A549 (cell line): ENCODE measurements at regions of chr9 and their contacts with region 1.

Region 1: GRCh38 chr9:37784616-37785483 is at the start of gene EXOSC3:
- DNase-seq: peak; percentile 93 to 94
- ATAC-seq: peak; percentile 98
- H3K4me3 ChIP-seq: peak within 1 kb of the TSS; percentile 74
- H3K27ac ChIP-seq: peak within 1 kb of the TSS; percentile 79 to 90
- H3K4me1 ChIP-seq: peaks cover 19% of the 10 kb centered on the region
- CTCF ChIP-seq: no peak
- EP300 ChIP-seq: no peak
- POLR2A ChIP-seq: peak; percentile 92
- RAD21 ChIP-seq: no peak
- polyA plus RNA-seq, gene EXOSC3: 40.7 and 63.2 TPM in 2 replicates

Region 2: DNA sequence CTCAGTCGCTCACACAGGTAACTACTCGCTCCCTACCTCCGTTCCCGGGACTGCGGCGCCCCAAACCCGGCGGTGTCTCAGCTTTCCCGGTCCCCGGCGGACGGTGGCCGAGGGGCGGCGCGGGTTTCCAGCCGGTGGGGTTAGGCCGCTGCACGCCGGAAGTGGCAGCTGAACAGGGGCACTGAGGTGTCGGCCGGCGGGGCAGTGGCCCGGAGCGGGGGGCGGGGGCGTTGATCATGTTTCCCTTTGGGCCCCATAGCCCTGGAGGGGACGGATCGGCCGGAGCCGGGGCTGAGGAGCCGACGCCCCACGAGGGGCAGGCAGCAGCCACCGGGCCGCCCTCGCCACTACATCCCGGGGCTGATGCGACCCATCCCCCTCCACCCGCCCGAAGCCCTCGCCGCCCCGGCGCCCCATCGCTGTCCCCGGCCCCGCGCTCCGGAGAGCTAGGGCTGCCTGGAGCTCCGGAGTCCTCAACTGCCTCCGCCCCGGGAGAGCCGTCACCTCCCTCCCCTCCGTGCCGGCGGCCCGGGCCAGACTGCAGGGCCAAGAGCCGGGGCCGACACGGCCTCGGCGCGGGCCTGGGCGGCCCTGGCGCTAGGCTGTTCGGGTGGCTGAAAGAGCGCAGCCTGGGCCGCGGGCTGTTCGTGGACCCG is 15.9 kb after region 1 on chr9 and contains the start of gene DCAF10:
- CTCF ChIA-PET with region 1: interaction called, 9 read pairs
- POLR2A ChIA-PET with region 1: interaction called, 40 read pairs
- DNase-seq: peak; percentile 58 to 89
- ATAC-seq: peak; percentile 89 to 92
- H3K4me3 ChIP-seq: peak within 1 kb of the TSS; percentile 86
- H3K27ac ChIP-seq: peak within 1 kb of the TSS; percentile 93 to 98
- H3K4me1 ChIP-seq: peaks cover 21% of the 10 kb centered on the region
- CTCF ChIP-seq: no peak
- EP300 ChIP-seq: peak in 1 of 2 experiments; percentile 25; a peak in 1 of 5 replicates
- POLR2A ChIP-seq: peak; percentile 65
- RAD21 ChIP-seq: no peak
- polyA plus RNA-seq, gene DCAF10: 25.8 and 33.1 TPM in 2 replicates

Region 3: DNA sequence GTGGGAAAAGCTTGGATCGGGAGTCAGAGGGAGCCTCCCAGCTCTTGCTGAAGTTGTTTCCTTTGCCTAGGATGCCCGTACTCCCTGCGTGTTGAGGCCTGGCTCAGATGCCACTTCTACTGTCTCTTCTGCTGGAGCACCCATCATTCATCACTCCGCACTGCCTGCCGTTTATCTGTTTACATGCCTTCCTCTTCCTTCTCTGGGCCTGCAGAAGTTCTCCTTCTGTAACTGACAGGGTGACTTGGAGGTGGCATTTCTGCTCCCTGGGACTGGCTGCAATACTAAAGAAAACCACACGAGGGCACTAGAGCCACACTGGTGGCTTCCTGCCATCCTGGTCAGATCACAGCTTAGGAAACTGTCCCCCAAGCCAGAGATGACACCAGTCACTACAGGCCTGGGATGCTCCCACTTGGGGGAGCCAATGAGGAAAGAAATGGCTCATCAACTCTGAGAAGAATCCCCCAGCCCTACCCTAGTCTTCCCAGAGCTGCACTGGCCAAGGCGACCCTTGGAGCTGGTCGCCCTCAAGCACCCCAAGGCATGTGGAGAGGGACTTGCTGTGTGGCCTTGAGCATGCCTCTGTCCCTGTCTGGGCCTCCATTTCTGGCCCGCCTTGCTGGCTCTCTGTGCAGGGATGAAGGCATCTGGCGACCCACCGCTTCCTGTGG is 128.8 kb after region 1 on chr9:
- CTCF ChIA-PET with region 1: no interaction called
- POLR2A ChIA-PET with region 1: no interaction called
- DNase-seq: peak; percentile 78 to 86
- ATAC-seq: peak; percentile 73 to 85
- H3K4me3 ChIP-seq: no peak overlapping the region
- H3K27ac ChIP-seq: peak overlapping the region; percentile 7 to 73; a peak in 4 of 6 replicates
- H3K4me1 ChIP-seq: peaks cover 31% of the 10 kb centered on the region
- CTCF ChIP-seq: peak; percentile 96
- EP300 ChIP-seq: no peak
- POLR2A ChIP-seq: no peak
- RAD21 ChIP-seq: peak; percentile 99